Activated T-helper 2 cell treated with anti-CD3 and anti-CD28 coated beads, Interferon-gamma antibody, Interleukin-2, Interleukin-4, amounts not matched to agents 10 μg/mL and 5 μg/mL and 100 μg/mL, durations not matched to agents 14 hours and 24 hours and 36 hours (primary cell): ENCODE measurements at regions of chr10 and their contacts with region 1.

Region 1: DNA sequence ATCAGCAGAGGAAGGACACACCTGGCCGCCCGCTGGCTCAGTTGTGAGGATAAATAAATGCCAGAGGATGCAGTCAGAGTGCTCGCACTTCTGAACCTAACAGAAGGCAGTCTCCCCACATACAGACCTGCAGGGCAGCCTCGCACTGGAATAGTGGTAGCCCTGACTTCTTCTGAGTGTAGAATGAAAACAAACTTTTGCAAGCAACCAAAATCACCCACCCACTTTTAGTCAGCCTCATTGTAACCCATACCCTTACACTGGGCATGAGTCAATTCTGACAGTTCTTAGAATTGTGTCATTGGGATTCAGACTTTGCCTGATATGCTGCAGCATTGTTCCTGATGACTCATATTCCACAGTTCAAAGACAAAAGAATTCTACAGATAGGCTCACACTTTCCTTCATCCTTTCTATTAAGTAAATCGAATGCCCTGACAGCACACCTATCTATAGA is 167.0 kb upstream of the CDK1 start:
- DNase-seq: no peak
- H3K4me3 Mint-ChIP-seq: no peak overlapping the region
- H3K27ac Mint-ChIP-seq: no peak overlapping the region
- H3K4me1 Mint-ChIP-seq: peaks cover 16% of the 10 kb centered on the region
- H3K27me3 Mint-ChIP-seq: no peaks in the 10 kb centered on the region

Region 2: DNA sequence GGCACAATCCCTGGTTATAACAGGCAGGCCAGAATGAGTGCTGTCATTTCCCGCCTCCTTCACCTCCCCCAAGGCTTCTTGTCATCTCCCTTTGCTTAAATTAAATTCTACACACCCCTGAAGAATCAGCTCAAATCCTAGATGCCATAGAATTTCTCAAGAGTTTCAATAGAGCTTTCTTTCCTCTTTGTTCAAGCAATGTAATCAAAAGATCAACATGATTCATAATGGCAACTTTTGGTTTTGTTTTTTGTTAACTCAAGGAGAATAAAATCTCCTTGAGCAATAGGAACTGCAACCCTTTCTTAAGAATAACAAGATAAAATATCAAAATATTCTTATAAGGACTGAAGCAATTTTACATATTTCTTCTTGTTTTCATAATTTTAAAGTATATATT is 13.8 kb before region 1 on chr10:
- intact Hi-C with region 1: loop called (anchors 1 kb)
- DNase-seq: no peak
- H3K4me3 Mint-ChIP-seq: no peak overlapping the region
- H3K27ac Mint-ChIP-seq: no peak overlapping the region
- H3K4me1 Mint-ChIP-seq: peaks cover 22% of the 10 kb centered on the region
- H3K27me3 Mint-ChIP-seq: no peaks in the 10 kb centered on the region

Region 3: GRCh38 chr10:61415824-61416223 is 804.5 kb after region 1 on chr10:
- intact Hi-C with region 1: no loop called
- DNase-seq: no peak
- H3K4me3 Mint-ChIP-seq: no peak overlapping the region
- H3K27ac Mint-ChIP-seq: no peak overlapping the region
- H3K4me1 Mint-ChIP-seq: no peaks in the 10 kb centered on the region
- H3K27me3 Mint-ChIP-seq: peaks cover 2% of the 10 kb centered on the region